K562 (cell line): ENCODE measurements at regions of chr17 and their contacts with region 1.

Region 1: DNA sequence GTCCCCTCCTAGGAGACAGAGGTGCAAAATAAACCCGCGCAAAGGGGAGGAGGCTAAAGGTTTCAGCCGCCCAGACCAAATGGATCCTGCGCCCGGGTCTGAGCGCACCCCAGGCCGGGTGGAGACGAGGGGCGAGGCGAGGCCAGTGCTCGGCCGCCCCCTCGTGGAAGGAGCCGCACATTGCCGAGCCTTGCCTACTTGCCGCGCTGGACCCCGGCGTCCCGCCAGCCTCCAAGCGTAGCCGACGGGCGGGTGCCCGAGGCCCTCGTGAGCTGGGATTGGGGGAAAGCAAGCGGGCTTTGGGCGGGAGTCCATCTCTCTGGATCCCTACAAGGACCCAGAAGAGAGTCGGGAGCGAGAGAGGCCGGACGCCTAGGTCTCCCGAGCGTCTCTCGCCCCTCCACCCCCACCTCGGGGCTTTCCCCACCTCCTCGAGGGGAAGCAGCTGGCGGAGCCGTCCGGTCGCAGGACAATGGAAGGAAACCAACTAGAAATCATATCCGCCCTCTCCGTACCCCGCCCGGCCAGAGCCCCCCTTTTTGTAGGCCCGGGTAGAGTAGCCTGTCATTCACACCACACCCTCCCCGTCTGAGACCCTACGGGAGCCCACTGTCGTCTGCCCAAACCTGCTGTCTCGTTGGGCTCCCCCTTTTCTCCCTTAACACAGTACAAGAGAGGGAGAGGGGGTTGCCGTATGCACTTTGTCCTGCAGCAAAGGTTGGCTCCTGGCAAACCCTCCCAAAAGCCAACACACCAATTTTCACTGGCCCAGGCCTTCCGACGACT is 664 bp upstream of the BCL6B start:
- DNase-seq: peak; percentile 68 to 86 (median 80)
- ATAC-seq: peak; percentile 77
- H3K4me3 ChIP-seq: no peak overlapping the region; the same call in 1 of the 2 replicates
- H3K27ac ChIP-seq: peak overlapping the region; percentile 60; the same call in 1 of the 3 replicates
- H3K4me1 ChIP-seq: peaks cover 33 to 72% of the 10 kb centered on the region in 2 experiments
- H3K27me3 ChIP-seq: no peaks in the 10 kb centered on the region
- CTCF ChIP-seq: peak; percentile 77 to 85 (median 78)
- EP300 ChIP-seq: no peak
- POLR2A ChIP-seq: no peak
- RAD21 ChIP-seq: peak; percentile 72 to 87

Region 2: DNA sequence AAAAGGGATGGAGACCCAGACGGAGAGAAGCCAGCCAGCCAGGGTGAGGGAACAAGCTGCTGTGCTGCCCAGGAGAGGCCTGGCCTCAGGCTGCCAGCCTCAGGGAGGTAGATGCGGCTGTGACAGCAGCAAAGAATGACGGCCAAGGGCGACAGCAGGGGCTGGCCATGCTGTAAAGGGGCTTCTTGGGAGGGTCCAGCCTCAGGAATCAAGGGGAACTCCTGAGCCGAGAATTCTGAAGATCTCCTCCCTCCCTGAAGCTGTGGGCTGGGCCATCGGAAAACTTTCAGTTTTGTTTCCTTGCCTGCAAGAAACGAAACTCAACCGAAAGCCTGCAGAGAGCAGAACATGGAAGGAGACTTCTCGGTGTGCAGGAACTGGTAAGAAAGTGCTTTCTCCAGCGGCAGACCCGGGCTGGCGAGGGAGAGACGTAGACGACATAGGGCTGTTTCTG is 266.4 kb before region 1 on chr17 and contains the start of gene XAF1:
- CTCF ChIA-PET with region 1: no interaction called
- POLR2A ChIA-PET with region 1: no interaction called
- in situ Hi-C with region 1: no loop called
- intact Hi-C with region 1: loop called (anchors 5 kb)
- DNase-seq: no peak
- ATAC-seq: peak; percentile 45
- H3K4me3 ChIP-seq: no peak within 1 kb of the TSS
- H3K27ac ChIP-seq: no peak within 1 kb of the TSS
- H3K4me1 ChIP-seq: peaks cover 3% of the 10 kb centered on the region in 2 experiments; a peak in 3 of 5 replicates
- H3K27me3 ChIP-seq: peaks cover 0 to 5% of the 10 kb centered on the region in 2 experiments; a peak in 2 of 5 replicates
- CTCF ChIP-seq: no peak
- EP300 ChIP-seq: no peak
- POLR2A ChIP-seq: no peak
- RAD21 ChIP-seq: no peak
- polyA plus RNA-seq, gene XAF1: 0.11 TPM in 1 of 2 experiments, not detected in the other

Region 3: DNA sequence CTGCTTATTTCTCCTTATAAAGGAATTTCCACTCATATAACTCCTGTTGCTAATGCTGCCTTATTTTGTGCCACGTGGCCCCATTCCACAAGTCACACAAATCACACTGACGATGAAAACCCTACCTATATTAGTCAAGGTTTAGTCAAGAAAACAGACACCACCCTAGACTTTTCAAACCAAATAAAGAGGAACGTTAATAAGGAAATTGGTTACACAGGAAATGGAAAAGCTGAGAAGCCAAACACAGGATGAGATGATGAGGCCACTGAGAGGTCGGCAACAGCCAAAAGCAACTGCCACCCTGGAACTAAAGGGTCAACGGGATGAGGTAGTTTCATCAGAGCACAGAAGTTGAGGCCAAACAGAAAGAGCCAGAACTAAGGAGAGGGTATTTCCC is 73.6 kb before region 1 on chr17:
- CTCF ChIA-PET with region 1: no interaction called
- POLR2A ChIA-PET with region 1: no interaction called
- in situ Hi-C with region 1: no loop called
- intact Hi-C with region 1: no loop called
- DNase-seq: no peak
- ATAC-seq: no peak
- H3K4me3 ChIP-seq: no peak overlapping the region
- H3K27ac ChIP-seq: peak overlapping the region; percentile 49; the same call in 1 of the 3 replicates
- H3K4me1 ChIP-seq: peaks cover 0 to 6% of the 10 kb centered on the region in 2 experiments; a peak in 2 of 5 replicates
- H3K27me3 ChIP-seq: no peaks in the 10 kb centered on the region
- CTCF ChIP-seq: no peak
- EP300 ChIP-seq: no peak
- POLR2A ChIP-seq: no peak
- RAD21 ChIP-seq: no peak